ENCODE measurements at regions of chr13 and their contacts with region 1.

Region 1: GRCh38 chr13:95676762-95677563 is at the start of gene DNAJC3:
- DNase-seq: peak; percentile 99
- H3K4me3 Mint-ChIP-seq: peak within 1 kb of the TSS; percentile 93
- H3K27ac Mint-ChIP-seq: peak within 1 kb of the TSS; percentile 86
- H3K4me1 Mint-ChIP-seq: peaks cover 50% of the 10 kb centered on the region
- H3K27me3 Mint-ChIP-seq: peaks cover 3% of the 10 kb centered on the region
- total RNA-seq, gene DNAJC3: 27.9 and 30.1 TPM in 2 replicates

Region 2: GRCh38 chr13:94595950-94596574 is 1080.9 kb before region 1 on chr13 and contains the start of gene TGDS:
- intact Hi-C with region 1: loop called (anchors 5 kb)
- DNase-seq: peak; percentile 88
- H3K4me3 Mint-ChIP-seq: peak within 1 kb of the TSS; percentile 93
- H3K27ac Mint-ChIP-seq: peak within 1 kb of the TSS; percentile 95
- H3K4me1 Mint-ChIP-seq: peaks cover 40% of the 10 kb centered on the region
- H3K27me3 Mint-ChIP-seq: no peaks in the 10 kb centered on the region
- total RNA-seq, gene TGDS: 29.7 TPM in 2 replicates

Region 3: GRCh38 chr13:95301183-95301967 is 375.6 kb before region 1 on chr13 and contains the start of gene ABCC4:
- intact Hi-C with region 1: loop called (anchors 5 kb)
- DNase-seq: peak; percentile 51
- H3K4me3 Mint-ChIP-seq: peak within 1 kb of the TSS; percentile 95
- H3K27ac Mint-ChIP-seq: peak within 1 kb of the TSS; percentile 82
- H3K4me1 Mint-ChIP-seq: peaks cover 33% of the 10 kb centered on the region
- H3K27me3 Mint-ChIP-seq: peaks cover 15% of the 10 kb centered on the region
- total RNA-seq, gene ABCC4: 16.4 and 20.2 TPM in 2 replicates

Region 4: GRCh38 chr13:95505265-95505664 is 171.7 kb before region 1 on chr13:
- intact Hi-C with region 1: no loop called
- DNase-seq: no peak
- H3K4me3 Mint-ChIP-seq: no peak overlapping the region
- H3K27ac Mint-ChIP-seq: no peak overlapping the region
- H3K4me1 Mint-ChIP-seq: no peaks in the 10 kb centered on the region
- H3K27me3 Mint-ChIP-seq: no peaks in the 10 kb centered on the region

Region 5: GRCh38 chr13:95660981-95661581 is 15.9 kb before region 1 on chr13:
- intact Hi-C with region 1: loop called (anchors 1 kb)
- DNase-seq: no peak
- H3K4me3 Mint-ChIP-seq: no peak overlapping the region
- H3K27ac Mint-ChIP-seq: no peak overlapping the region
- H3K4me1 Mint-ChIP-seq: no peaks in the 10 kb centered on the region
- H3K27me3 Mint-ChIP-seq: peaks cover 21% of the 10 kb centered on the region

Region 6: DNA sequence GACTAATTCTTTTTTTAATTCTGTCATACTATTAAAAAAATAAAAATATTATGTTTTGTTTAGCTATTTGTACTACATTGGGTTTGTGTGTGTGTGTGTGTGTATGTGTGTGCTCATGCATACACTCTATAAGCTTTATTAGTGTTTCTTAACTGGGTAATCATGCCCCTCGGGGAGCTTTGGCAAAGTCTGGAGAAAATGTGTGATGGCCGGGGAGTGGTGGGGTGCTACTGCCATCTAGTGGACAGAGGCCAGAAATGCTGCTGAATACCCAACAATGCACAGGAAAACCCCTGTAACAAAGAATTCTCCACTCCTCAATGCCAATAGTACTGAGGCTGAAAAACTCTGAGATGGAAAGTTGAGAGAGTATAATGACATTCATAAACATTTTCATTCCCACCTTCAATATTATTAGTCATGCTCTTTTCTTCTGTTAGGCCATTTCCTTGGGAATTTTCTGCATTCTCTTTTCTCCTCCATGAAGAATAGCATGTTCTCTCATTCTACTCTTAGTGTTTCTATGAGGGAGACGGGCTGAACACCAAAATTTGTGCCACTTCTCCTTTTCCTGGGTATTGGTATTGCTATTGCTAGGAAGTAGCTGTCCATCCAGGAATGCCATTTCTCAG is 157.3 kb after region 1 on chr13:
- intact Hi-C with region 1: loop called (anchors 1 kb)
- DNase-seq: peak; percentile 38
- H3K4me3 Mint-ChIP-seq: no peak overlapping the region
- H3K27ac Mint-ChIP-seq: no peak overlapping the region
- H3K4me1 Mint-ChIP-seq: no peaks in the 10 kb centered on the region
- H3K27me3 Mint-ChIP-seq: peaks cover 15% of the 10 kb centered on the region

Region 7: GRCh38 chr13:95880331-95880730 is 203.4 kb after region 1 on chr13:
- intact Hi-C with region 1: no loop called
- DNase-seq: no peak
- H3K4me3 Mint-ChIP-seq: no peak overlapping the region
- H3K27ac Mint-ChIP-seq: no peak overlapping the region
- H3K4me1 Mint-ChIP-seq: no peaks in the 10 kb centered on the region
- H3K27me3 Mint-ChIP-seq: peaks cover under 1% of the 10 kb centered on the region

Measured in activated T-helper 1 cell treated with anti-CD3 and anti-CD28 coated beads, Interleukin-12 subunit alpha, Interleukin-12 subunit beta, Interleukin-2, Interleukin-4 antibody, amounts not matched to agents 30 ng/mL and 10 ng/mL and 1 ng/mL, durations not matched to agents 14 hours and 24 hours and 36 hours (primary cell).